Astrocyte of the cerebellum (primary cell): ENCODE measurements at regions of chr19 and their contacts with region 1.

Region 1: GRCh38 chr19:19591133-19591825 is 27.2 kb downstream of the PBX4 start:
- DNase-seq: peak; percentile 73
- H3K4me3 ChIP-seq: no peak overlapping the region
- CTCF ChIP-seq: no peak

Region 2: GRCh38 chr19:19531951-19532805 is 59.1 kb before region 1 on chr19:
- in situ Hi-C with region 1: loop called (anchors 5 kb)
- DNase-seq: no peak
- H3K4me3 ChIP-seq: no peak overlapping the region
- CTCF ChIP-seq: peak; percentile 94

Region 3: DNA sequence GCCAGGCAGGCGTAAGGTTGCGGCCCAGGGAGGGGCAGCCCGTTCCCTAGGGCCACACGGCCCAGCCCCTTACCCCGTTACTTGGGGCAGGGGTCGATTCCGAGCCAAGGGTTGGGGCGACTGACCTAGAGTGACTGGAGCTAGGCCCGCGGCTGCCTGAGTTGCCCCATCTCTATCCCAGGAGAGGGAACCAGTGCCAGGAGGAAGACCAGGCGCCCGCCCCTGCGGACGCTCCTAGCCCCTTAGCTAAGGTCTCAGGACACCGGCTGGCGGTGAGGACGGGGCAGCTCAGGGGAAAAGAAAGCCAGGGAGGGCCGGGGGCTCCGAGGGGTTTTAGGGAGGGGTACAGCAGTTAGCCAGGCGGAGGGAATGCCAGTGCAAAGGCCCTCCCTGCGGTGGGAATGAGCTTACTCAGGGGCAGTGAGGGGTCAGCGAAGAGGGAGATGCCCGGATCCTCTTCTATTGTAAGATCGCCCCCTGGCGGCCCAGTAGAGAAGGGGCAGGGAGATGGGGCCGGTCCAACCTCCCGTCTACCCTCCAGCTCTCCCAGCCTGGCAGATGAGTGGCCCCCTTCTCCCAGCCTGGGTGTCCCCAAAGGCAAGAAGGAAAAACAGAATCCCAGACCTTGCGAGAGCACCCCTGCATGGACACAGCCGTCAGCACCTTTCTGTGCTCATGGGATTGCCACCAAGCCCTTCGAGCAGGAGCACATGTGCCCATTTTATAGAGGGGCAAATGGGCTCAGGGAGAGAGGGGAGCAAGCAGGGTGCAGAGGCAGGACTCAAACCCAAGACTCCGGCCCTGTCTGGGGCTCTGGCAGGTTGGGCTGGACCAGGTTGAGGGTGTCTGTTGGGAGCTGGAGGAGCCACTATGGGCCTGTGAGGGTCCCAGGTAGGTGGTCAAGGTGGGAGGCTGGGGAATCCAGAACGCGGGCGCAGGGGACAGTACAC is 36.9 kb before region 1 on chr19:
- in situ Hi-C with region 1: loop called (anchors 5 kb)
- DNase-seq: peak; percentile 11
- H3K4me3 ChIP-seq: no peak overlapping the region
- CTCF ChIP-seq: peak; percentile 87